ENCODE measurements at regions of chr6 and their contacts with region 1.

Region 1: DNA sequence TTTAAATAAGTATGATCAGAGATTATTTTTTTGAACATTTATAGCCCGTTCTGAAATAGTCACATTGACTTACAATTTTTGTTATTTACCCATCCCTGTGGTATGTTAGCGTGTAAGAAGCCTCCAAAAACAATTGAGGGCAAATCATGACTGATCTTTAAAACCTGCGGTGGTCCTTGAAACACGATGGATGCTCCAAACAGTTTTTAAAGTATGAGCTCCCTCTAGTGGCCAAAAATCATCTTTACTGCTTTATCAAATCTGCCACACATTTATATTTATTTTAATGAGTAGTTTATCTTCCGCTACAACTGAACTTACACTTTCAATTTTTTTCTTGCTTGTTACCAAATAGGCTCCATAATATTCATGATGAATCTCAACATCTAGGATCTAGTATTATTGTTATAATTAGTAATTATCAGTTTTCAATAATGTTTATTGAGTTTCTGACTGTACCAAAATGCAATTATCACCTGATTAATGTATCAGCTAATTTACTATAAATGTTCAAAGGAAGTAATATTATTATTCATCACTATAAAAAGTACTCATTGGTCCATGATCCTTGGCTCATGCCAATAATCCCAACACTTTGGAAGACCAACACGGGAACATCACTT is 52.2 kb downstream of the MARCKS start:
- DNase-seq: peak; percentile 81
- H3K4me3 ChIP-seq: no peak overlapping the region
- H3K27ac ChIP-seq: no peak overlapping the region
- H3K4me1 ChIP-seq: peaks cover 2% of the 10 kb centered on the region
- H3K27me3 ChIP-seq: no peaks in the 10 kb centered on the region
- CTCF ChIP-seq: peak; percentile 30 to 37
- POLR2A ChIP-seq: no peak

Region 2: DNA sequence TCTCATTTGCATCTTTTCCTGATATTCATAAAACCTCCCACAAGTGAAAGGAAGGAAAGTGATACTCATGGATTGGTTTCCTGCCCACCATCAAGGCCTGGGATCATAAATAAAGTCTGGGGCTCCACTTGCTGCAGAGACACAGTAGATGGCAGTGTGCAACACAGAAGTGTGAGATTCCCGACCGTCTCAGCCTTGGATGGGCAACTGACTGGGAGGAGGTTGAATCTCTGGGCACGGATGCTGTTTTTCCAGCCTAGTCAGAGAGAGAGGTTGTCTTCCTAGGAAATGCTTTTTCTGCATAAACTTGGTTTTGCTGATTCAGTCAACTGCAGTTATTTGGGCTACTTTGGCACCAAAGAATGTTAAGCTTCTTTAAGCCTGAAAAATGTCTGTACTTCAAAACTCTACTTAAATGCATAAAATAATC is 1572.1 kb before region 1 on chr6:
- CTCF ChIA-PET with region 1: interaction called, 4 read pairs
- POLR2A ChIA-PET with region 1: no interaction called
- dilution Hi-C with region 1: no loop called
- intact Hi-C with region 1: loop called (anchors 1 kb)
- DNase-seq: peak; percentile 89
- H3K4me3 ChIP-seq: no peak overlapping the region
- H3K27ac ChIP-seq: no peak overlapping the region
- H3K4me1 ChIP-seq: peaks cover 8% of the 10 kb centered on the region
- H3K27me3 ChIP-seq: no peaks in the 10 kb centered on the region
- CTCF ChIP-seq: peak; percentile 75 to 85
- POLR2A ChIP-seq: peak; percentile 62

Region 3: DNA sequence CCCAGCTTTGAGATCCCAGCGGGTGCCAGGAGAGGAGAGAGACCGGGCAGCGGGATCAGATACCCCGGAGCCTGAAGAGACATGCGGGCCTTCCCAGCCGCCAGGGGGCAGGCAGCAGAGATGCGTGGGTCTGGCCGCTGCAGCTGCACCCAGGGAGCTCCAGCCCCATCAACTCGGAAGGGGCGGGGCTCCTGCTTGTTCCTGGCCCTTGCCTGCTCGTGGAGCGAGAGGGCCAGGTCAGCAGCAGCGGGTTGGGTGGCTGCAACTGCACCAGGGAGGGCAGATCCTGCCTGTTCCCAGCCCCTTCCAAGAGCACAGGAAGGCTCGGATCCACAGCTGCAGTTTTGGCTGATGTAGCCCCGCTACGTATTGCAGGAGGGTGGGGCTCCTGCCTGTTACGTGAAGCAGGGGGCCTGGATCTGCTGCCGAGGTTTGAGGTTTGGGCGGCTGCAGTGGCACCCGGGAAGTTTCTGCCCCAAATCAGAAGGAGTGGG is 1029.4 kb before region 1 on chr6:
- CTCF ChIA-PET with region 1: interaction called, 4 read pairs
- POLR2A ChIA-PET with region 1: no interaction called
- dilution Hi-C with region 1: no loop called
- intact Hi-C with region 1: loop called (anchors 10 kb)
- DNase-seq: no peak
- H3K4me3 ChIP-seq: no peak overlapping the region
- H3K27ac ChIP-seq: no peak overlapping the region
- H3K4me1 ChIP-seq: peaks cover 23% of the 10 kb centered on the region
- H3K27me3 ChIP-seq: no peaks in the 10 kb centered on the region
- CTCF ChIP-seq: no peak
- POLR2A ChIP-seq: no peak

Region 4: GRCh38 chr6:113182370-113183141 is 726.8 kb before region 1 on chr6:
- CTCF ChIA-PET with region 1: no interaction called
- POLR2A ChIA-PET with region 1: no interaction called
- dilution Hi-C with region 1: no loop called
- intact Hi-C with region 1: loop called (anchors 10 kb)
- DNase-seq: peak; percentile 82
- H3K4me3 ChIP-seq: peak overlapping the region in 1 of 3 experiments; percentile 38
- H3K27ac ChIP-seq: peak overlapping the region; percentile 87
- H3K4me1 ChIP-seq: peaks cover 29% of the 10 kb centered on the region
- H3K27me3 ChIP-seq: no peaks in the 10 kb centered on the region
- CTCF ChIP-seq: no peak
- POLR2A ChIP-seq: no peak

Region 5: GRCh38 chr6:113879186-113880096 is 29.9 kb before region 1 on chr6:
- CTCF ChIA-PET with region 1: interaction called, 15 read pairs
- POLR2A ChIA-PET with region 1: no interaction called
- dilution Hi-C with region 1: no loop called
- intact Hi-C with region 1: no loop called
- DNase-seq: peak; percentile 91
- H3K4me3 ChIP-seq: peak overlapping the region in 1 of 3 experiments; percentile 69
- H3K27ac ChIP-seq: peak overlapping the region; percentile 63
- H3K4me1 ChIP-seq: peaks cover 9% of the 10 kb centered on the region
- H3K27me3 ChIP-seq: no peaks in the 10 kb centered on the region
- CTCF ChIP-seq: peak; percentile 68
- POLR2A ChIP-seq: no peak